GM12878 (cell line): ENCODE measurements at regions of chr6 and their contacts with region 1.

Region 1: GRCh38 chr6:24991810-24992467 is 56.2 kb upstream of the RIPOR2 start:
- DNase-seq: peak; percentile 54
- ATAC-seq: peak; percentile 98
- H3K4me3 ChIP-seq: no peak overlapping the region
- H3K27ac ChIP-seq: no peak overlapping the region
- H3K4me1 ChIP-seq: peaks cover 6% of the 10 kb centered on the region
- H3K27me3 ChIP-seq: no peaks in the 10 kb centered on the region
- CTCF ChIP-seq: peak; percentile 77 to 81 (median 79)
- EP300 ChIP-seq: no peak
- POLR2A ChIP-seq: no peak
- RAD21 ChIP-seq: peak; percentile 99

Region 2: DNA sequence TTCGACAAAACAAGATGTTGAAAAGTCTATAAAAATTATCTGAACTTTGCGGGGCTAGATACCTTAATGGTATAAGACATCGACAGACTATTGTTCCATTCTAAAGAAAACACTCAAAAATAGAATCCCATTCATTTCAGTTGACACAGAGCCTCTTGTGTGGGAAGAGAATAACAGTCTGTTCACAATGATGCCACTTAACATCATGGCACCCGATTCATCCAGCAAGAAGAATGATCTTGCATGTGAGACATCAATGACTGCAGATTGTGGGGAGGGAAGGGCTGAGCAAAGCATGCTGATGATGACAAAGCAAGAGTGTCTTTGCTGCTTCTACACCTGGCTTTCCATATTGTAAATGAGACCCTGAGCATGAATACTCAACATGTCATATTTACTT is 143.5 kb before region 1 on chr6:
- CTCF ChIA-PET with region 1: interaction called, 230 read pairs
- POLR2A ChIA-PET with region 1: no interaction called
- RAD21 ChIA-PET with region 1: interaction called, 160 read pairs
- SMC1A ChIA-PET with region 1: interaction called, 243 read pairs
- in situ Hi-C with region 1: no loop called
- intact Hi-C with region 1: no loop called
- DNase-seq: no peak
- ATAC-seq: no peak
- H3K4me3 ChIP-seq: no peak overlapping the region
- H3K27ac ChIP-seq: no peak overlapping the region
- H3K4me1 ChIP-seq: no peaks in the 10 kb centered on the region
- H3K27me3 ChIP-seq: no peaks in the 10 kb centered on the region
- CTCF ChIP-seq: no peak
- EP300 ChIP-seq: no peak
- POLR2A ChIP-seq: no peak
- RAD21 ChIP-seq: no peak

Region 3: GRCh38 chr6:24883618-24884017 is 108.3 kb before region 1 on chr6:
- CTCF ChIA-PET with region 1: interaction called, 38 read pairs
- POLR2A ChIA-PET with region 1: interaction called, 3 read pairs
- RAD21 ChIA-PET with region 1: interaction called, 16 read pairs
- SMC1A ChIA-PET with region 1: interaction called, 26 read pairs
- in situ Hi-C with region 1: no loop called
- intact Hi-C with region 1: no loop called
- DNase-seq: peak; percentile 84
- ATAC-seq: peak; percentile 90
- H3K4me3 ChIP-seq: no peak overlapping the region
- H3K27ac ChIP-seq: peak overlapping the region; percentile 60; the same call in 1 of the 2 replicates
- H3K4me1 ChIP-seq: peaks cover 33% of the 10 kb centered on the region
- H3K27me3 ChIP-seq: no peaks in the 10 kb centered on the region
- CTCF ChIP-seq: no peak
- EP300 ChIP-seq: peak; percentile 54 to 74; a peak in 3 of 4 replicates
- POLR2A ChIP-seq: no peak
- RAD21 ChIP-seq: no peak

Region 4: GRCh38 chr6:24919004-24919892 is 72.7 kb before region 1 on chr6:
- CTCF ChIA-PET with region 1: interaction called, 36 read pairs
- POLR2A ChIA-PET with region 1: no interaction called
- RAD21 ChIA-PET with region 1: interaction called, 24 read pairs
- SMC1A ChIA-PET with region 1: interaction called, 42 read pairs
- in situ Hi-C with region 1: no loop called
- intact Hi-C with region 1: loop called (anchors 5 kb)
- DNase-seq: no peak
- ATAC-seq: peak; percentile 75
- H3K4me3 ChIP-seq: peak overlapping the region; percentile 13; the same call in 1 of the 2 replicates
- H3K27ac ChIP-seq: peak overlapping the region; percentile 1
- H3K4me1 ChIP-seq: peaks cover 28% of the 10 kb centered on the region
- H3K27me3 ChIP-seq: no peaks in the 10 kb centered on the region
- CTCF ChIP-seq: no peak
- EP300 ChIP-seq: no peak
- POLR2A ChIP-seq: no peak
- RAD21 ChIP-seq: no peak

Region 5: GRCh38 chr6:24960991-24961475 is 30.9 kb before region 1 on chr6:
- CTCF ChIA-PET with region 1: interaction called, 27 read pairs
- POLR2A ChIA-PET with region 1: no interaction called
- RAD21 ChIA-PET with region 1: interaction called, 13 read pairs
- SMC1A ChIA-PET with region 1: interaction called, 17 read pairs
- in situ Hi-C with region 1: no loop called
- intact Hi-C with region 1: no loop called
- DNase-seq: no peak
- ATAC-seq: no peak
- H3K4me3 ChIP-seq: no peak overlapping the region
- H3K27ac ChIP-seq: no peak overlapping the region
- H3K4me1 ChIP-seq: peaks cover 8% of the 10 kb centered on the region
- H3K27me3 ChIP-seq: no peaks in the 10 kb centered on the region
- CTCF ChIP-seq: no peak
- EP300 ChIP-seq: no peak
- POLR2A ChIP-seq: no peak
- RAD21 ChIP-seq: no peak

Region 6: GRCh38 chr6:25006565-25007001 is 14.6 kb after region 1 on chr6:
- CTCF ChIA-PET with region 1: interaction called, 153 read pairs
- POLR2A ChIA-PET with region 1: interaction called, 5 read pairs
- RAD21 ChIA-PET with region 1: interaction called, 16 read pairs
- SMC1A ChIA-PET with region 1: interaction called, 144 read pairs
- in situ Hi-C with region 1: no loop called
- intact Hi-C with region 1: no loop called
- DNase-seq: no peak
- ATAC-seq: peak; percentile 72
- H3K4me3 ChIP-seq: 0 out of 2 replicates have a peak overlapping the region, but pooled peaks have one; percentile 28
- H3K27ac ChIP-seq: peak overlapping the region; percentile 46; the same call in 1 of the 2 replicates
- H3K4me1 ChIP-seq: peaks cover 14% of the 10 kb centered on the region
- H3K27me3 ChIP-seq: no peaks in the 10 kb centered on the region
- CTCF ChIP-seq: no peak
- EP300 ChIP-seq: peak in 1 of 2 experiments; percentile 44; a peak in 1 of 4 replicates
- POLR2A ChIP-seq: no peak
- RAD21 ChIP-seq: no peak

Region 7: GRCh38 chr6:25042036-25042521 is 50.1 kb after region 1 on chr6:
- CTCF ChIA-PET with region 1: interaction called, 7 read pairs
- POLR2A ChIA-PET with region 1: no interaction called
- RAD21 ChIA-PET with region 1: interaction called, 10 read pairs
- SMC1A ChIA-PET with region 1: interaction called, 4 read pairs
- in situ Hi-C with region 1: no loop called
- intact Hi-C with region 1: no loop called
- DNase-seq: no peak
- ATAC-seq: peak; percentile 62
- H3K4me3 ChIP-seq: peak overlapping the region; percentile 67
- H3K27ac ChIP-seq: peak overlapping the region; percentile 60
- H3K4me1 ChIP-seq: peaks cover 23% of the 10 kb centered on the region
- H3K27me3 ChIP-seq: no peaks in the 10 kb centered on the region
- CTCF ChIP-seq: no peak
- EP300 ChIP-seq: no peak
- POLR2A ChIP-seq: peak; percentile 50; the same call in 1 of the 2 replicates
- RAD21 ChIP-seq: no peak

Region 8: DNA sequence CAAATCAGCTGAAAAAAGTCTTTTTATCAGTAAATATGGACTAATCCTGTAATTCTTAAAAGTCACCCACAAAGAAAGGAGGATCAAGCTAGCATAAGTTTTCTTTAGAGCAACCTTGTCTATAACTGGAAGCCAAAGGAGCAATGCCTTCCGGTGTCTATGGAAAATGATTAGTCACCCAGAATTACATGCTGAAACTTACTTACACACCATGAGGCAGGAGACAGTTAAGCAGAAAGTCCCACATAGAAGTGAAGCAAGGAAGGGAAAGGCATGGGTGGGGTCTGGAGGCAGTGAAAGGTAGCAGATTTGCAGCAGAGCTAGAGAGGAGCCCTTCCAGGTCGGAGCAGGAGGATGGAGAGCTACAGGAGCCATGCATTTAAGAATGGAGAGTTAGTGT is 97.5 kb after region 1 on chr6:
- CTCF ChIA-PET with region 1: no interaction called
- POLR2A ChIA-PET with region 1: no interaction called
- RAD21 ChIA-PET with region 1: no interaction called
- SMC1A ChIA-PET with region 1: no interaction called
- in situ Hi-C with region 1: no loop called
- intact Hi-C with region 1: no loop called
- DNase-seq: no peak
- ATAC-seq: no peak
- H3K4me3 ChIP-seq: no peak overlapping the region
- H3K27ac ChIP-seq: no peak overlapping the region
- H3K4me1 ChIP-seq: no peaks in the 10 kb centered on the region; the same call in 1 of the 2 replicates
- H3K27me3 ChIP-seq: no peaks in the 10 kb centered on the region
- CTCF ChIP-seq: no peak
- EP300 ChIP-seq: no peak
- POLR2A ChIP-seq: no peak
- RAD21 ChIP-seq: no peak